B cell (primary cell): ENCODE measurements at regions of chr5 and their contacts with region 1.

Region 1: DNA sequence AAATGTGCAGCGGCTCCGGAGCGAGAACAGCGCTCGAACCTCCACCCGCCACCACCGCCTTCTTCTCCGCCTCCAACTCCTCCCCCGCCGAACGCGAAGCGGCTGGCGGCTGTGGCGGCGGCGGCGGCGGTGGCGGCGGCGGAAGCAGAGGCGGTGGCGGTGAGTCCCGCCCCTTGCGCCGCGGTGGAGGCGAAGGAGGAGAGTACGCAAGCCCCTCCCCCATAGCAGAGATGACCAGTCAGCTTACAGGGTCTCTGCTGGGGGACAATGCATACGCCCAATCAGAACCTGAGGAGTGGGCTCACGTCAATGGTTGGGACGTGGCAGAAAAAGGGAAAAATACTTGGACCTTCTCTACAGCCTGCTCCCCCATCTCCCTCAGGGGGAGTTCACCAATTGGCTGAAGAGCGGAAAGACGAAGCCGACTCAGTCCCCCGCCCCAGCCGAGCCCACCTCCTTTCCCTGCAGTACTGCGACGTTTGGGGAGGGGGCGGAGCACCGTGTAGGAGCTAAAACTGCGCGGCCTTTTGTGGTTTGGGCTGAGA is at the start of gene PJA2:
- DNase-seq: peak; percentile 99
- ATAC-seq: peak; percentile 86
- H3K4me3 ChIP-seq: peak within 1 kb of the TSS; percentile 94 to 98 (median 96)
- H3K4me3 Mint-ChIP-seq: peak within 1 kb of the TSS; percentile 99
- H3K27ac ChIP-seq: peak within 1 kb of the TSS; percentile 96 to 99
- H3K27ac Mint-ChIP-seq: peak within 1 kb of the TSS; percentile 99
- H3K4me1 ChIP-seq: peaks cover 13 to 36% of the 10 kb centered on the region in 2 donors
- H3K4me1 Mint-ChIP-seq: peaks cover 43% of the 10 kb centered on the region
- H3K27me3 ChIP-seq: no peaks in the 10 kb centered on the region
- H3K27me3 Mint-ChIP-seq: no peaks in the 10 kb centered on the region
- CTCF ChIP-seq: peak; percentile 21
- total RNA-seq, gene PJA2: 90.4 and 92.7 TPM in 2 replicates

Region 2: GRCh38 chr5:108727651-108728565 is 682.0 kb before region 1 on chr5:
- CTCF ChIA-PET with region 1: interaction called, 5 read pairs
- POLR2A ChIA-PET with region 1: interaction called, 14 read pairs
- intact Hi-C with region 1: loop called (anchors 1 kb)
- DNase-seq: peak; percentile 87
- ATAC-seq: peak; percentile 86
- H3K4me3 ChIP-seq: peak overlapping the region; percentile 71 to 98 (median 91)
- H3K4me3 Mint-ChIP-seq: peak overlapping the region; percentile 87
- H3K27ac ChIP-seq: peak overlapping the region; percentile 96
- H3K27ac Mint-ChIP-seq: peak overlapping the region; percentile 94
- H3K4me1 ChIP-seq: peaks cover 32 to 33% of the 10 kb centered on the region in 2 donors
- H3K4me1 Mint-ChIP-seq: peaks cover 44% of the 10 kb centered on the region
- H3K27me3 ChIP-seq: no peaks in the 10 kb centered on the region
- H3K27me3 Mint-ChIP-seq: no peaks in the 10 kb centered on the region
- CTCF ChIP-seq: no peak

Region 3: DNA sequence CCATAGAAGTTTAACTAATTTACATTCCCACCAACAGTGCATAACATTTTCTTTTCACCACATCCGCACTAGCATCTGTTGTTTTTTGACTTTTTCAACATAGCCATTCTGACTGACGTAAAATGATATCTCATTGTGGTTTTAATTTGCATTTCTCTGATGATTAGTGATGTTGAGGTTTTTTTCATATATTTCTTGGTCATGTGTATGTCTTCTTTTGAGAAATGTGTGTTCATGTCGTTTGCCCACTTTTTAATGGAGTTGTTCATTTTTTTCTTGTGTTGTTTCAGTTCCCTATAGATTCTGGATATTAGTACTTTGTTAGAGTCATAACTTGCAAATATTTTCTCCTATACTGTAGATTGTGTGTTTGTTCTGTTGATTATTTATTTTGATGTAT is 498.9 kb before region 1 on chr5:
- CTCF ChIA-PET with region 1: no interaction called
- POLR2A ChIA-PET with region 1: no interaction called
- intact Hi-C with region 1: loop called (anchors 2 kb)
- DNase-seq: peak; percentile 26
- ATAC-seq: peak; percentile 69
- H3K4me3 ChIP-seq: no peak overlapping the region
- H3K4me3 Mint-ChIP-seq: peak overlapping the region; percentile 12
- H3K27ac ChIP-seq: no peak overlapping the region
- H3K27ac Mint-ChIP-seq: peak overlapping the region; percentile 62
- H3K4me1 ChIP-seq: no peaks in the 10 kb centered on the region
- H3K4me1 Mint-ChIP-seq: peaks cover 14% of the 10 kb centered on the region
- H3K27me3 ChIP-seq: no peaks in the 10 kb centered on the region
- H3K27me3 Mint-ChIP-seq: no peaks in the 10 kb centered on the region
- CTCF ChIP-seq: no peak

Region 4: GRCh38 chr5:109155625-109156024 is 254.3 kb before region 1 on chr5:
- CTCF ChIA-PET with region 1: no interaction called
- POLR2A ChIA-PET with region 1: no interaction called
- intact Hi-C with region 1: no loop called
- DNase-seq: no peak
- ATAC-seq: no peak
- H3K4me3 ChIP-seq: no peak overlapping the region
- H3K4me3 Mint-ChIP-seq: no peak overlapping the region
- H3K27ac ChIP-seq: no peak overlapping the region
- H3K27ac Mint-ChIP-seq: no peak overlapping the region
- H3K4me1 ChIP-seq: no peaks in the 10 kb centered on the region
- H3K4me1 Mint-ChIP-seq: no peaks in the 10 kb centered on the region
- H3K27me3 ChIP-seq: no peaks in the 10 kb centered on the region
- H3K27me3 Mint-ChIP-seq: no peaks in the 10 kb centered on the region
- CTCF ChIP-seq: no peak

Region 5: GRCh38 chr5:109324931-109325330 is 85.0 kb before region 1 on chr5:
- CTCF ChIA-PET with region 1: no interaction called
- POLR2A ChIA-PET with region 1: no interaction called
- intact Hi-C with region 1: no loop called
- DNase-seq: no peak
- ATAC-seq: no peak
- H3K4me3 ChIP-seq: no peak overlapping the region
- H3K4me3 Mint-ChIP-seq: no peak overlapping the region
- H3K27ac ChIP-seq: no peak overlapping the region
- H3K27ac Mint-ChIP-seq: no peak overlapping the region
- H3K4me1 ChIP-seq: no peaks in the 10 kb centered on the region
- H3K4me1 Mint-ChIP-seq: no peaks in the 10 kb centered on the region
- H3K27me3 ChIP-seq: no peaks in the 10 kb centered on the region
- H3K27me3 Mint-ChIP-seq: no peaks in the 10 kb centered on the region
- CTCF ChIP-seq: no peak

Region 6: DNA sequence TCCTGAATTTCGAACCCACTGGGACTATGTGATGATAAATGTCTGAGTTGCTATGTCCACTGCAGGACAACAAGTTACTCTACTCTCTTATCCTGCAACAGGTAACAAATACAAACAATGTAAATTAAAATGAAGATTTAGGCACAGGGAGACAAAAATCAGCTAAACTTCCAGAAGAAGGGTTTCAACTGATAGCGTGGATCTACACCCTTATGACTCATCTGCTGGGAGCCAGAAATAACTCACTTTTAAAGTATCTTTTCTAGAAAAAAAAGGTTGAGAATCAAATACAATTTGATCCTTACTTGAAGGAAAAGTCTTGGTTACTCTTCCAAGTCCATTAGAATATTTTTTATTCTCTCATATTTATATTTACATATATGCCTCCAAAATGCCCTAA is 21.5 kb before region 1 on chr5:
- CTCF ChIA-PET with region 1: no interaction called
- POLR2A ChIA-PET with region 1: no interaction called
- intact Hi-C with region 1: loop called (anchors 2 kb)
- DNase-seq: no peak
- ATAC-seq: no peak
- H3K4me3 ChIP-seq: no peak overlapping the region
- H3K4me3 Mint-ChIP-seq: no peak overlapping the region
- H3K27ac ChIP-seq: no peak overlapping the region
- H3K27ac Mint-ChIP-seq: no peak overlapping the region
- H3K4me1 ChIP-seq: peaks cover 0 to 9% of the 10 kb centered on the region in 2 donors
- H3K4me1 Mint-ChIP-seq: peaks cover 68% of the 10 kb centered on the region
- H3K27me3 ChIP-seq: no peaks in the 10 kb centered on the region
- H3K27me3 Mint-ChIP-seq: no peaks in the 10 kb centered on the region
- CTCF ChIP-seq: no peak

Region 7: GRCh38 chr5:110738812-110739651 is 1329.1 kb after region 1 on chr5 and contains the start of gene SLC25A46:
- CTCF ChIA-PET with region 1: no interaction called
- POLR2A ChIA-PET with region 1: no interaction called
- intact Hi-C with region 1: loop called (anchors 2 kb)
- DNase-seq: peak; percentile 96
- ATAC-seq: peak; percentile 82
- H3K4me3 ChIP-seq: peak within 1 kb of the TSS; percentile 72 to 98 (median 92)
- H3K4me3 Mint-ChIP-seq: peak within 1 kb of the TSS; percentile 100
- H3K27ac ChIP-seq: peak within 1 kb of the TSS; percentile 83 to 97
- H3K27ac Mint-ChIP-seq: peak within 1 kb of the TSS; percentile 99
- H3K4me1 ChIP-seq: peaks cover 14 to 17% of the 10 kb centered on the region in 2 donors
- H3K4me1 Mint-ChIP-seq: peaks cover 29% of the 10 kb centered on the region
- H3K27me3 ChIP-seq: peaks cover 0 to 4% (median 0%) of the 10 kb centered on the region in 4 experiments
- H3K27me3 Mint-ChIP-seq: peaks cover 10% of the 10 kb centered on the region
- CTCF ChIP-seq: no peak
- total RNA-seq, gene SLC25A46: 36.9 and 38.0 TPM in 2 replicates